CD4-positive, alpha-beta T cell (primary cell): ENCODE measurements at regions of chr19 and their contacts with region 1.

Region 1: DNA sequence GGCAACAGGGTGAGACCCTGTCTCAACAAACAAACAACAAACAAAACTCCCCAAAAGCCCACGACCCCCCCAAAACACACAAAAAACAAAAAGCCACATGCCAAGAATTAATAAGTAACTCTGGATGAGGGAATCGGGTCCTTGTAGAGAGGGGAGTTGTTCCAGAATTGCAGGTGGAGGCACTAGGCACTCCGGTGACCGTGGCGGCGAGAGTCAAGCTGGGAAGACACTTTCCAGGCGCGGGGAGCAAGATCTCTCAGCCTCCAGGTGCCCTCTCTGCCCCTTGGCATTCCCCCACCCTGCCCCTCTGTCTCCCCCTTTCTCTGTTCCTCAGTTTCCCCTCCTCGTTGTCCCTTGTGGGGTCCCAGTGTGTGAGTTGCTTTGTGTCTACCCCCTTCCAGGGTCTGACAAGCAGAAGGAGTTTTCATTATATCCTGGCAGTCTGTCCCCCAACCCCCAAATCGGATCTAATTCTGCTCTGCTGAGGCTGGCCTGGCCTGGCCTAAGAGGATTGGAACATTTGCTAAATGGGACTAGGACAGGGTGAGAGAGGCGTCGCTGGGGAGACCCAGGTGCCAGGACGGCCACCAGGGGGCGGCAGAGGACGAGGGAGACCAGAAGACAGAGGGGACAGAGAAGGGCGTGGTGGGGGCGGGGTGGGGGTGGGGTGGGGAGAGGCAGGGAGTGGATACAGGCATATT is 8.3 kb upstream of the CRX start:
- DNase-seq: peak; percentile 61 to 82 (median 70)
- ATAC-seq: peak; percentile 57
- H3K4me3 ChIP-seq: no peak overlapping the region
- H3K4me3 Mint-ChIP-seq: no peak overlapping the region
- H3K27ac ChIP-seq: no peak overlapping the region
- H3K27ac Mint-ChIP-seq: no peak overlapping the region
- H3K4me1 ChIP-seq: no peaks in the 10 kb centered on the region
- H3K4me1 Mint-ChIP-seq: no peaks in the 10 kb centered on the region
- H3K27me3 ChIP-seq: no peaks in the 10 kb centered on the region
- H3K27me3 Mint-ChIP-seq: peaks cover 13% of the 10 kb centered on the region
- CTCF ChIP-seq: peak; percentile 60

Region 2: DNA sequence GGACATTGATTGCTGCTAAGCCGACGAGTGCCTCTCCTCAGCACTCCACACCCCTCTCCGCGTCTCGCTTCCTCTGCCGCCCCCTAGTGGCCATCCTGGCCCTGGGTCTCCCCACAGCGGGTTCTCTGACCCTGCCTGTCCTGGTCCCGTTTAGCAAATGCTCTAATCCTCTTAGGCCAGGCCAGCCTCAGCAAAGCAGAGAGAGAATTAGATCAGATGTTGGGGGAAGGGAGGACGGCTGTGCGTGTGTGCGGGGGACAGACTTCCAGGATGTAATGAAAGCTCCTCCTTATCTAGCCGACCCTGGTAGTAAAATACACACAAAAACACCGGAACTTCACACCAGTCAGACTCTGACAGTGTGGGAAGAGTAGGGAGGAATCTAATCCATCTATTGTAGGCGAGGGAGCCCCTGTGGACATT is 50.1 kb after region 1 on chr19:
- CTCF ChIA-PET with region 1: no interaction called
- POLR2A ChIA-PET with region 1: no interaction called
- intact Hi-C with region 1: loop called in 1 of 2 experiments (anchors 1 kb)
- DNase-seq: peak; percentile 61 to 91 (median 81)
- ATAC-seq: peak; percentile 91
- H3K4me3 ChIP-seq: no peak overlapping the region
- H3K4me3 Mint-ChIP-seq: no peak overlapping the region
- H3K27ac ChIP-seq: no peak overlapping the region
- H3K27ac Mint-ChIP-seq: no peak overlapping the region
- H3K4me1 ChIP-seq: peaks cover 4% of the 10 kb centered on the region
- H3K4me1 Mint-ChIP-seq: no peaks in the 10 kb centered on the region
- H3K27me3 ChIP-seq: peaks cover 0 to 4% of the 10 kb centered on the region in 2 experiments
- H3K27me3 Mint-ChIP-seq: peaks cover 24% of the 10 kb centered on the region
- CTCF ChIP-seq: peak; percentile 94